GM10248 (cell line): ENCODE measurements at regions of chr20 and their contacts with region 1.

Region 1: GRCh38 chr20:62900052-62900691 is 26.1 kb downstream of the DIDO1 start:
- DNase-seq: peak; percentile 89
- CTCF ChIP-seq: peak; percentile 95

Region 2: GRCh38 chr20:62875419-62876361 is 24.5 kb before region 1 on chr20:
- CTCF ChIA-PET with region 1: interaction called, 25 read pairs
- POLR2A ChIA-PET with region 1: no interaction called
- DNase-seq: no peak
- CTCF ChIP-seq: no peak

Region 3: DNA sequence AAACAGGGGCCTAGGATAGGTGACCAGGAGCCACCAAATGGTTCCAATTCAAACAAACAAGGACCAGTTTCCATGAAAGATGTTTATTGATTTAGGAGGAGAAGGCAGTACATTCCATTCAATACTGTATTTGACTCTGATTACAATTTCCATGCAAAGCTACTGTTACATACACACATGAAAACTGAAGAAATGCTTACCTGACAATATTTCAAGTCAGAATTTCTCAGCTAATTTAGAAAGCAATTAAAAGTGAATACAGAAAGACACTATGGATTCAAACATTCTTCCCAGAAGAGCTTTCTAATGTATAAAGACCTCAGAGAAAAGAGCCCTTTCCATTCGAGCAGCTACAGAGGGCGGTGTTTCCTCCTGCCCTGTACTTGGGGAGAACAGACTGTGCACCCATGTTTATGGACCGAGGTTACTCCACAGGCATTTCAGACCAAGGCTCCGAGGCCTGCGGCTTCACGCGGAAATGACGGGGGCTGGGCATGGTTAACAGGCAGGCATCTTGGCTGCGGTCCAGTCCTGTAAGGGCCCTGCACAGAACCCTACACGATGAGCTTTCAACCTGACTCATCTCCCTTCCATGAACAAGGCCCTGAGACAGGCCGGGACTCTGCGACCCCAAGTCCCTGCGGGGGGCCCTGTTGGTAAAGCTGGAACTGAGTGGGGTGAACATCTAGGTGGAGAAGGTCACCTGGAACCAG is 12.9 kb before region 1 on chr20:
- CTCF ChIA-PET with region 1: interaction called, 66 read pairs
- POLR2A ChIA-PET with region 1: no interaction called
- DNase-seq: no peak
- CTCF ChIP-seq: no peak

Region 4: GRCh38 chr20:62921119-62921687 is 21.0 kb after region 1 on chr20:
- CTCF ChIA-PET with region 1: interaction called, 153 read pairs
- POLR2A ChIA-PET with region 1: no interaction called
- DNase-seq: peak; percentile 47
- CTCF ChIP-seq: peak; percentile 15

Region 5: DNA sequence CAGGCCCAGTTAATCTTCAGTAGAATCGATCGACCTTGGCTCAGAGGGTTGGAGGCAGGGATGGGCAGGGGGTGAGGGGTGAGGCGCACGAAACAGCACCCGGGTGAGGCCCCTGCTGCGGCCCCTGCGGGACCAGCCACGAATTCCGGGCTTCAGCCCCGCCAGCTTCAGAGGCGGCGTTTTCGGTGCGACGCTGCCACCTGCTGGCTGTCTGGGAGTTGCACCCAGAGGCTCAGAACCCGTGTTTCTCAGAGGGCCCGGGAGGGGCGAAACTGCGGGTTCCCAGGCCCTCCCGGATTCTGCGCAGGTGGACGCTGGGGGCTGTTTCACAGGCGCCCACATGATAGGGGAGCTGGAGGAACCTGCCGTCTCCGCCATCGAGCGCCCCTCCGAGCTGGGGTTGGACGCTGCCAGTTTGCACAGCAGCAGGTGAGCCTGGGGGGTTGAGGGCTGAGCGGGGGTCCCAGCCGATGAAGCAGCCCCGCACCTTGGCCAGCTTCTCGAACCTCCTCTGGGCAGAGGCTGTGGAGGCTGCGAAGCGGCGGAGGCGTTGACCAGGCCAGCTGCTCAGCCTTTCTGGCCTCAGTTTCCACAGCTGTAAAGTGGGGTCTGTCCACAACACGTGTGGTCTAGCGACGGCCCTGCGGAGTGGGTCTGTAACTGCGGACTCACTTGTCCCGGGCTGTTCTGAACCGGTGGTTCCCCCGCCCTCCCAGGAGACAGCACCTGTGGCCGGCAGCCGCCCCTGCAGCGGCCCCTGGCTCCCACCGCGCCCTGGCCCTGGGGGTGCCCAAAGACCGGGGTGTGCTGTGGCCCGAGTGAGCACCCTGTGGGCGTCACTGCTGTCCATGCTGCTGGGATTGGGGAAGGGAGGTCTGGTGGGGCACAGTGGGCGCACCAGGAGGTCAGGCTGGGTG is 109.1 kb after region 1 on chr20:
- CTCF ChIA-PET with region 1: interaction called, 11 read pairs
- POLR2A ChIA-PET with region 1: no interaction called
- DNase-seq: peak; percentile 95
- CTCF ChIP-seq: peak; percentile 99